ENCODE measurements at regions of chr7 and their contacts with region 1.

Region 1: GRCh38 chr7:44534501-44534900 is 6.6 kb downstream of the NPC1L1 start:
- DNase-seq: peak; percentile 62
- ATAC-seq: peak; percentile 77
- H3K4me3 Mint-ChIP-seq: no peak overlapping the region
- H3K27ac Mint-ChIP-seq: no peak overlapping the region
- H3K4me1 Mint-ChIP-seq: no peaks in the 10 kb centered on the region
- H3K27me3 Mint-ChIP-seq: no peaks in the 10 kb centered on the region

Region 2: DNA sequence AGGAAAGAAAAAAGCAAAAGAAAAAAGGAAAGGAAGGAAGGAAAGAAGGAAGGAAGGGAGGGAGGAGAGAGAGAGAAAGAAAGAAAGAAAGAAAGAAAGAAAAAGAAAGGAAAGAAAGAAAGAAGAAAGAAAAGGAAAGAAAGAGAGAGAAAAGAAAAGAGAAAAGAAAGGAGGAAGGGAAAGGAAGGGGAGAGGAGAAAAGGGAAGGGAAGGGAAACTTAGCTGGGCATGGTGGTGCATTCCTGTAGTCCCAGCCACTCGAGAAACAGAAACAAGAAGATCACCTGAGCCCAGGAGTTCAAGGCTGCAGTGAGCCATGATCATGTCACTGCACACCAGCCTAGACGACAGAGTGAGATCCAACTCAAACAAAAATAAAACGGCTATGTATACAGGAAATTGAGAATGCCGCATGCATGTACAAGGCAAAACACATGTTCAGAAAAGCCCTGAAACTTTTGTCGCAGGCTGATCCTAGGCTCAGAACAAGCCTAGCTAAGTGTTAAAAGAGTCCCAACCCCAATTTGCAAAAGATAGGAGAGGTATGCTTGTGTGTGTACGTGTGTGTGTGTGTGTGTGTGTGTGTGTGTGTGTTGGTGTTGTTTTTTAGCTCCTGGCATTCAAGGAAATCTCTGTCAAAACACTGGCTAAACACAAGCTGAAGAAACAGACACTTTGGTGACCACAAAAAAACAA is 13.2 kb after region 1 on chr7:
- CTCF ChIA-PET with region 1: interaction called, 15 read pairs
- DNase-seq: no peak
- ATAC-seq: no peak
- H3K4me3 Mint-ChIP-seq: no peak overlapping the region
- H3K27ac Mint-ChIP-seq: no peak overlapping the region
- H3K4me1 Mint-ChIP-seq: peaks cover 5% of the 10 kb centered on the region
- H3K27me3 Mint-ChIP-seq: peaks cover 29% of the 10 kb centered on the region